MCF 10A (cell line): ENCODE measurements at regions of chr19 and their contacts with region 1.

Region 1: DNA sequence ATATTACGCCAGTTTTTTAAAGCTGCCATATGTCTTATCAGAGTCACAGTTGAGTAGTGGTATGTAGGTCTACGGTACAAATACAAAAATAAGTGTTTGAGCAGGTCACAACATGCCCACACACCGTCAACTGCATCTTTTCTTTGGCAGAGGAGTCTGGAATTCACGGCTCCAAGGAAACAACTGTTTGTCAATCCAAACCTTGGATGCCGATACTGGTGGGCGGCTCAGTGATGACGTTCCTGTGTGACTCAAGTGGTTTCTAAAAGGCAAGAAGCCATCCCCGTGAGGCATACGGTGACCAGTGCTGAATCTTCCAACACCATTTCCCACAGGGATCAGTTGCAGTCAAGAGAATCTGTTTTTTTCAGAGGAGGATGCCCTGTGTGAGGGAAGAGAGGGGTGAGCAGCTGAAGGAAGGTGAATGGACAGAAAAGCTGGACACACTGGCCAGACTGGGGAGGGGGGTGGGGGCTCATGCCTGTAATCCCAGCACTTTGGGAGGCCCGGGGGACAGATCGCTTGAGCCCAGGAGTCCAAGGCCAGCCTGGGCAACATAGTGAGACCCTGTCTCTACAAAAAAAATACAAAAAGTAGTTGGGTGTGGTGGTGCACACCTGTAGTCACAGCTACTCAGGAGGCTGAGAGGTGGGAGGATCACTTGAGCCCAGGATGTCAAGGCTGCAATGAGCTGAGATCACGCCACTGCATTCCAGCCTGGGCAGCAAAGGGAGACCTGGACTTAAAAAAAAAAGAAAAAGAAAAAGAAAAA is 22.8 kb upstream of the CEBPG start:
- DNase-seq: peak; percentile 99
- H3K4me3 Mint-ChIP-seq: peak overlapping the region; percentile 38
- H3K27ac Mint-ChIP-seq: peak overlapping the region; percentile 84
- H3K4me1 Mint-ChIP-seq: peaks cover 18% of the 10 kb centered on the region
- H3K27me3 Mint-ChIP-seq: no peaks in the 10 kb centered on the region
- CTCF ChIP-seq: no peak

Region 2: GRCh38 chr19:33339016-33339984 is 11.4 kb before region 1 on chr19:
- CTCF ChIA-PET with region 1: interaction called, 4 read pairs
- POLR2A ChIA-PET with region 1: interaction called, 9 read pairs
- intact Hi-C with region 1: loop called (anchors 1 kb)
- DNase-seq: peak; percentile 92
- H3K4me3 Mint-ChIP-seq: no peak overlapping the region
- H3K27ac Mint-ChIP-seq: peak overlapping the region; percentile 16
- H3K4me1 Mint-ChIP-seq: peaks cover 10% of the 10 kb centered on the region
- H3K27me3 Mint-ChIP-seq: no peaks in the 10 kb centered on the region
- CTCF ChIP-seq: no peak

Region 3: GRCh38 chr19:33368074-33368864 is 17.5 kb after region 1 on chr19:
- CTCF ChIA-PET with region 1: interaction called, 7 read pairs
- POLR2A ChIA-PET with region 1: interaction called, 81 read pairs
- intact Hi-C with region 1: loop called (anchors 2 kb)
- DNase-seq: peak; percentile 73
- H3K4me3 Mint-ChIP-seq: no peak overlapping the region
- H3K27ac Mint-ChIP-seq: peak overlapping the region; percentile 74
- H3K4me1 Mint-ChIP-seq: peaks cover 12% of the 10 kb centered on the region
- H3K27me3 Mint-ChIP-seq: no peaks in the 10 kb centered on the region
- CTCF ChIP-seq: no peak

Region 4: GRCh38 chr19:33553530-33554310 is 203.0 kb after region 1 on chr19:
- CTCF ChIA-PET with region 1: no interaction called
- POLR2A ChIA-PET with region 1: no interaction called
- intact Hi-C with region 1: no loop called
- DNase-seq: no peak
- H3K4me3 Mint-ChIP-seq: no peak overlapping the region
- H3K27ac Mint-ChIP-seq: no peak overlapping the region
- H3K4me1 Mint-ChIP-seq: no peaks in the 10 kb centered on the region
- H3K27me3 Mint-ChIP-seq: no peaks in the 10 kb centered on the region
- CTCF ChIP-seq: no peak